ENCODE measurements at regions of chr11 and their contacts with region 1.

Region 1: GRCh38 chr11:128831174-128832120 is 35.6 kb downstream of the KCNJ1 start:
- DNase-seq: peak; percentile 76
- H3K4me3 ChIP-seq: no peak overlapping the region
- H3K27ac ChIP-seq: no peak overlapping the region
- H3K27me3 ChIP-seq: peaks cover 7% of the 10 kb centered on the region
- CTCF ChIP-seq: peak; percentile 84

Region 2: DNA sequence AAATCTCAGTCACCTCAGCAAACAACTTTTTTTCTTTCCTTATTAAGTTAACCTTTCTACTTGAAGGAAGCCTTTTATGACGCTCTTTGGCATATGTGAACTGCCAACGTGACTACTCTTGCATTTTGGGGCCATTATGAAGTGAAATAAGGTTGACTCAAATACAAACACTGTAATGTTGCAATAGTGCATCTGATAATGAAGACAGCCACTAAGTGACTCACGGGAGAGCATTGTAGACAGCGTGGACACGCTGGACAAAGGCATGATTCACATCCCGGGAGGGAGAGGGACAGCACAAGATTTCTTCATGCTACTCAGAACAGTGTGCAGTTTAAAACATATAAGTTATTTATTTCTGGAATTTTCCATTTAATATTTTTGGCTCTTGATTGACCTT is 804.9 kb before region 1 on chr11:
- CTCF ChIA-PET with region 1: interaction called, 11 read pairs
- POLR2A ChIA-PET with region 1: no interaction called
- DNase-seq: peak; percentile 76
- H3K4me3 ChIP-seq: no peak overlapping the region
- H3K27ac ChIP-seq: no peak overlapping the region
- H3K27me3 ChIP-seq: no peaks in the 10 kb centered on the region
- CTCF ChIP-seq: no peak

Region 3: DNA sequence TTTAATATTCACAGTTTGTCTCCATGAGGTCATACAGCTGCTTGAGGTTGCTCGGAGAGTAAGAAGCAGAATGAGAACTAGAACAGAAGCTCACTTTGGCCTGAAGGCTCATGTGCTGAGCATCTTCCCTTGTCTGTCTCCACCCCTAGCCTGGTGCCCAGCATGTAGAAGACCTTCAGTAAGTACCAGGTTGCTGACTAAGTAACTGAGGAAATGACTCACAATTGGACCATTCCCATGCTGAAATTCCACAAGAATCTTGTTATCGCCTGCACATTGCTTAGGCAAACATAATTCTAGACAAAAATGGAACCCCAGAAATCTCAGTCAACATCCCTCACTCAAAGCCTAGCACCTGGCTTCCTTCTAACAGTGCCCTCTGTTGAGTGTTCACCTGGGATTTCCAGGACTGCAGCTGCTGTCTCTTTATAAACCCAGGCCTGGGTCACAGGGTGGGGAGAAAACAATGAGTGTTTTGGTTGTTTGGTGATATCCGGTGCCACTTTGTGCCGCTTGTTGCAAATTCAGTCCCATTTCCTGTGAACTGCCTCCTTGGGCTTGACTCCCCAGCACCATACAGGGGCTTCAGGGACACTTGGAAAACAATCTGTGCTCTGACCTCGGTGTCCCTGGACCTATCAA is 650.9 kb before region 1 on chr11:
- CTCF ChIA-PET with region 1: interaction called, 10 read pairs
- POLR2A ChIA-PET with region 1: no interaction called
- DNase-seq: peak; percentile 56
- H3K4me3 ChIP-seq: no peak overlapping the region
- H3K27ac ChIP-seq: no peak overlapping the region
- H3K27me3 ChIP-seq: no peaks in the 10 kb centered on the region
- CTCF ChIP-seq: no peak

Region 4: GRCh38 chr11:128552783-128553661 is 278.4 kb before region 1 on chr11:
- CTCF ChIA-PET with region 1: interaction called, 14 read pairs
- POLR2A ChIA-PET with region 1: no interaction called
- DNase-seq: no peak
- H3K4me3 ChIP-seq: no peak overlapping the region
- H3K27ac ChIP-seq: no peak overlapping the region
- H3K27me3 ChIP-seq: no peaks in the 10 kb centered on the region
- CTCF ChIP-seq: no peak

Region 5: DNA sequence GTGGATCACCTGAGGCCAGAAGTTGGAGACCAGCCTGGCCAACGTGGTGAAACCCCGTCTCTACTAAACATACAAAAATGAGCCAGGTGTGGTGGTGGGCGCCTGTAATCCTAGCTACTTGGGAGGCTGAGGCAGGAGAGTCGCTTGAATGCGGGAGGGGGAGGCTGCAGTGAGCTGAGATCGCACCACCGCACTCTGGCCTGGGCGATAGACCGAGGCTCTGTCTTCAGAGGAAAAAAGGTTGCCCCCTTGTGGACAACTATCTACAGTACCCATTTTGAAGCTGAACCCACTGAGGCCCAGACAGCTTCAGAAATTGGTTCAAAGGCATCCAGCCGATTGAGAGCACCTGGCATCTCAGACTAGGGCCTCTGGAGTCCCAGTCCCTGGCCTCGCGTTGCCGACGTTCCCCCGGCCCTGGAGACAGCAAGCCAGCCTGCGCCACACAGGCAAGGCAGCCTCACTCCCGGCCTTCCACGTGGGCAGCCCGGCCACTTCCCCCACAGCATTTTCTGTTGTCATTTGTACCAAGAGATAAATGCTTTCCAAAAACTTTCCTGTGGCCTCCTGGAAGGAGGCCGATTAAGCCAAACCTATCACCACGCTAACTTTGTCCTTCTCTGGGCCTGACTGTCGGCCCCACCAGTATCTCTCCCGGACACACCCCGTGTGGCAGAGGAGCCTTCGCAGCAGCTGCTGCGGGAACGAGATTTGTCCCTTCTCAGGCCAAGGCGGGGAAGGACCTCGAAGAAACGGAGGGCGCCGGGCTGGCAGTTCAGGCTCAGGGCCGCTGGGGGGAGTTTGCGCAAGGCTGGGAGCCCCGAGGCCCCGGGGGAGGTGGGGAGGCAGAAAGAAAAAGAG is 54.8 kb before region 1 on chr11:
- CTCF ChIA-PET with region 1: interaction called, 39 read pairs
- POLR2A ChIA-PET with region 1: no interaction called
- DNase-seq: no peak
- H3K4me3 ChIP-seq: no peak overlapping the region
- H3K27ac ChIP-seq: peak overlapping the region; percentile 21
- H3K27me3 ChIP-seq: no peaks in the 10 kb centered on the region
- CTCF ChIP-seq: peak; percentile 67

Region 6: GRCh38 chr11:128956401-128957201 is 125.2 kb after region 1 on chr11:
- CTCF ChIA-PET with region 1: interaction called, 13 read pairs
- POLR2A ChIA-PET with region 1: no interaction called
- DNase-seq: peak; percentile 47
- H3K4me3 ChIP-seq: no peak overlapping the region
- H3K27ac ChIP-seq: no peak overlapping the region
- H3K27me3 ChIP-seq: peaks cover 5% of the 10 kb centered on the region
- CTCF ChIP-seq: peak; percentile 74

Measured in AG04450 (cell line).